ENCODE measurements at regions of chr22 and their contacts with region 1.

Region 1: GRCh38 chr22:31230871-31231621 is 18.9 kb downstream of the LIMK2 start:
- DNase-seq: peak; percentile 92
- H3K4me3 ChIP-seq: no peak overlapping the region
- H3K27ac ChIP-seq: peak overlapping the region; percentile 83
- H3K4me1 ChIP-seq: peaks cover 69% of the 10 kb centered on the region
- H3K27me3 ChIP-seq: no peaks in the 10 kb centered on the region
- CTCF ChIP-seq: peak; percentile 79 to 85
- POLR2A ChIP-seq: peak; percentile 42

Region 2: GRCh38 chr22:30541961-30542810 is 688.9 kb before region 1 on chr22:
- CTCF ChIA-PET with region 1: no interaction called
- POLR2A ChIA-PET with region 1: no interaction called
- dilution Hi-C with region 1: no loop called
- intact Hi-C with region 1: no loop called
- DNase-seq: no peak
- H3K4me3 ChIP-seq: peak overlapping the region in 1 of 3 experiments; percentile 10
- H3K27ac ChIP-seq: no peak overlapping the region
- H3K4me1 ChIP-seq: no peaks in the 10 kb centered on the region
- H3K27me3 ChIP-seq: peaks cover 14 to 15% of the 10 kb centered on the region in 2 experiments
- CTCF ChIP-seq: no peak
- POLR2A ChIP-seq: no peak

Region 3: GRCh38 chr22:30947816-30948454 is 283.1 kb before region 1 on chr22:
- CTCF ChIA-PET with region 1: interaction called, 10 read pairs
- POLR2A ChIA-PET with region 1: no interaction called
- dilution Hi-C with region 1: no loop called
- intact Hi-C with region 1: loop called (anchors 5 kb)
- DNase-seq: peak; percentile 63
- H3K4me3 ChIP-seq: no peak overlapping the region
- H3K27ac ChIP-seq: no peak overlapping the region
- H3K4me1 ChIP-seq: no peaks in the 10 kb centered on the region
- H3K27me3 ChIP-seq: no peaks in the 10 kb centered on the region
- CTCF ChIP-seq: peak; percentile 16 to 40
- POLR2A ChIP-seq: no peak

Region 4: GRCh38 chr22:31107178-31107893 is 123.7 kb before region 1 on chr22 and contains the start of gene SELENOM:
- CTCF ChIA-PET with region 1: interaction called, 99 read pairs
- POLR2A ChIA-PET with region 1: interaction called, 3 read pairs
- dilution Hi-C with region 1: no loop called
- intact Hi-C with region 1: loop called (anchors 1 kb)
- DNase-seq: peak; percentile 98
- H3K4me3 ChIP-seq: peak within 1 kb of the TSS; percentile 10 to 85 (median 60)
- H3K27ac ChIP-seq: peak within 1 kb of the TSS; percentile 64
- H3K4me1 ChIP-seq: peaks cover 11% of the 10 kb centered on the region
- H3K27me3 ChIP-seq: no peaks in the 10 kb centered on the region
- CTCF ChIP-seq: peak; percentile 97 to 99
- POLR2A ChIP-seq: peak; percentile 71
- total RNA-seq, gene SELENOM: 29.6 TPM in 2 replicates

Region 5: DNA sequence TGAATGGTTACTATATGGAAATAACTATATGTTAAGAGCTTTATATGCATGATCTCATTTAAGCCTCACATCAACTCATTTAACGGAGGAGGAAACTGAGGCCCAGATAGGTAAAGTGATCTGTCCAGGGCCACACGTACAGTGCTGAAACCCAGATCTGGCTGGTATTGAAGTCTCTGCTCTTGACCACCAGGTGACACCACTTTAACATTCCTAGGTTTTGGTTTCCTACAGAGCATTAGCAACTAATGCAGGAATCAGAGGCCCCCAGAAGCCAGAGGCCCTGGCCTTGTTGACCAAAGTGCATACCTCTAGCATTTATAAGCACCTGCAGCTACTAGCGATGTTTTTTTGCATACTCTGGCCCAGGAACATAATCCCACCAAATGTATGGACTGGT is 31.9 kb before region 1 on chr22:
- CTCF ChIA-PET with region 1: interaction called, 19 read pairs
- POLR2A ChIA-PET with region 1: no interaction called
- dilution Hi-C with region 1: no loop called
- intact Hi-C with region 1: loop called (anchors 1 kb)
- DNase-seq: no peak
- H3K4me3 ChIP-seq: no peak overlapping the region
- H3K27ac ChIP-seq: no peak overlapping the region
- H3K4me1 ChIP-seq: no peaks in the 10 kb centered on the region
- H3K27me3 ChIP-seq: no peaks in the 10 kb centered on the region
- CTCF ChIP-seq: peak; percentile 26 to 31
- POLR2A ChIP-seq: no peak

Region 6: DNA sequence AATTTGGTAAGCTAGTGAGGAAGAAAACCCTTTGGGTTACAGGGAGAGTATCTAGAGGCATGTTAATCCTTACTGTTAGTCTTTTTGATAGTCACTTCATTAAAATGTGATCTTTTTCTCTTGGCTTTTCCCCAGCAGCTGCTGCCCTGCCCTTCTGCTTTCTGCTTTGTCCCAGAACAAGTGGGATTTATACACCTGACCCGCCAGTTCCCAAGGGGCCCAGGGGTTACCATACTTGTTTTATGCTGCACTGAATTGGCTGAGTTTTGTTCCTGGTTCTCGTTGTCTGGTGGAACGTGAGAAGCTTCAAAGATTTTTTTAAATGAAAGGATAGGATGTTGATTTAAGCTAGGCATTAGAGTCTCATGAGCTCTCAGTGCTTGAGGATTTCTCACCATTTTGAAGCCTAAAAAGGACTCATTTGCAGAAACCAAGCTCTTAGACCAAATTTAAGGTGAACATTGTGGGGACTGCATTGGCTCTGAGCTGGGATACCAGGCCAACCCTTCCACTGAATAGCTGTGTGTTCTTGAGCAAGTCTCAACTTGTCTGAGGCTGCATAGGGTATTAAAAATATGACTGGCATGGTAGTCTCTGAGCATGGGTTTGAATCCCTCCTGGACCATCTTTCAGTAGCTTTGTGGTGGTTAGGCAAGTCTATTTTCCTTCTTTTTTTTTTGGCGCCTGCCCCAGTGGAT is 12.3 kb before region 1 on chr22:
- CTCF ChIA-PET with region 1: interaction called, 181 read pairs
- POLR2A ChIA-PET with region 1: interaction called, 5 read pairs
- dilution Hi-C with region 1: no loop called
- intact Hi-C with region 1: no loop called
- DNase-seq: no peak
- H3K4me3 ChIP-seq: no peak overlapping the region
- H3K27ac ChIP-seq: peak overlapping the region; percentile 94
- H3K4me1 ChIP-seq: peaks cover 51% of the 10 kb centered on the region
- H3K27me3 ChIP-seq: no peaks in the 10 kb centered on the region
- CTCF ChIP-seq: no peak
- POLR2A ChIP-seq: no peak

Region 7: GRCh38 chr22:31253949-31254348 is 22.9 kb after region 1 on chr22:
- CTCF ChIA-PET with region 1: interaction called, 11 read pairs
- POLR2A ChIA-PET with region 1: no interaction called
- dilution Hi-C with region 1: no loop called
- intact Hi-C with region 1: no loop called
- DNase-seq: peak; percentile 82
- H3K4me3 ChIP-seq: no peak overlapping the region
- H3K27ac ChIP-seq: peak overlapping the region; percentile 32
- H3K4me1 ChIP-seq: peaks cover 8% of the 10 kb centered on the region
- H3K27me3 ChIP-seq: no peaks in the 10 kb centered on the region
- CTCF ChIP-seq: peak in 1 of 2 donors; percentile 27
- POLR2A ChIP-seq: no peak

Region 8: GRCh38 chr22:31579835-31580242 is 348.8 kb after region 1 on chr22:
- CTCF ChIA-PET with region 1: no interaction called
- POLR2A ChIA-PET with region 1: no interaction called
- dilution Hi-C with region 1: no loop called
- intact Hi-C with region 1: no loop called
- DNase-seq: no peak
- H3K4me3 ChIP-seq: no peak overlapping the region
- H3K27ac ChIP-seq: no peak overlapping the region
- H3K4me1 ChIP-seq: peaks cover 15% of the 10 kb centered on the region
- H3K27me3 ChIP-seq: no peaks in the 10 kb centered on the region
- CTCF ChIP-seq: no peak
- POLR2A ChIP-seq: no peak

Measured in endothelial cell of umbilical vein (primary cell).